ENCODE measurements at regions of chr2 and their contacts with region 1.

Region 1: DNA sequence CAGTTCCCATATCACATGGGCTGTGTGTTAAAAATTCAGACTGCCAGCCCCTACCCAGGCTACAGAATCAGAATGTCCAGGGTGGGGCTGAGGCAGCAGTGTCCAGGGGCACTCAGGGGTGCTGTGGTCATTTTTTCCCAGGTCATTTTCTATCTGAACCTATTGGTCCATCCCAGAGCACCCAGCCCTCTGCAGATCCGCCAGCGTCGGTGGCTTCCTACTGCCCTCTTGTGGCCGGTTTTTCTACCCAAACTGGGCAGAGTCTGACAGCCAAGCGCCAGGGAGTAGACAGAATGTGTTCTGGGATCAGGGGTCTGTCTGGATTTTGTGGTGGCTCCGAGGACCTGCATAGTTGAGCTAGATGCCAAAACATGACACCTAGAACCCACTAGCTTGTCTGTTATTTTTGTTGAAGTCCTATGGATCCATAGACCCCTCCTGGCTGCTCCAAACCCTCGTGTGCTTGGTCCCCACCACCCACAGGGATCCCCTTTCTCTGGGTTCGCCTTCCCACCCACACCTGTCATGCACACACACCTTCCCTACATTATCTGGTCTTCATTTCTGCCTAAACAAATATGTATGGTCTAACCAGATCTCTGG is 34.1 kb upstream of the RMDN2 start:
- DNase-seq: peak; percentile 79 to 90
- ATAC-seq: peak; percentile 98 to 100
- H3K4me3 ChIP-seq: no peak overlapping the region
- H3K27ac ChIP-seq: no peak overlapping the region
- H3K4me1 ChIP-seq: no peaks in the 10 kb centered on the region
- CTCF ChIP-seq: peak; percentile 91
- EP300 ChIP-seq: no peak
- POLR2A ChIP-seq: no peak
- RAD21 ChIP-seq: peak; percentile 86 to 94

Region 2: GRCh38 chr2:37767956-37768925 is 122.8 kb before region 1 on chr2:
- CTCF ChIA-PET with region 1: no interaction called
- POLR2A ChIA-PET with region 1: no interaction called
- DNase-seq: peak; percentile 53 to 87
- ATAC-seq: peak; percentile 80 to 95
- H3K4me3 ChIP-seq: no peak overlapping the region
- H3K27ac ChIP-seq: peak overlapping the region; percentile 86 to 92
- H3K4me1 ChIP-seq: peaks cover 71% of the 10 kb centered on the region
- CTCF ChIP-seq: no peak
- EP300 ChIP-seq: peak; percentile 72 to 88; a peak in 4 of 5 replicates
- POLR2A ChIP-seq: no peak
- RAD21 ChIP-seq: peak; percentile 40 to 66

Region 3: DNA sequence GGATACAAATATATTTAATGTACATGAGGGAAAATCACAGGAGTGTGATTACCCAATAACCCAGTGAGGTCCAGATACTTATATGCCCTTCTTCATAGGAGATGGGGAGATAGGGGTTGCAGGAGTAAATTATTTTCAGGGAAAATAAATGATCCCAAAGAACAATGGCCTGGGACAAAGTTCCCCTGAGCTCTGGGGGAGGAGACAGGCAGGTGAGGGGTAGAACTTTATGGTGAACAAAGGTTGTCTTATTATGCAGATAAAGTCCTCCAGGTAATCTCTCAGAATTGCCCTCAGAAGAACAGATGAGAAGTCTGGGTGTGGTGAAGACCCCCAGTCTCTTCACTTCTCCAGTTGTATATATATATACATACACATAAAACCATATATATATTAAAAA is 12.0 kb after region 1 on chr2:
- CTCF ChIA-PET with region 1: interaction called, 30 read pairs
- POLR2A ChIA-PET with region 1: no interaction called
- DNase-seq: no peak
- ATAC-seq: no peak
- H3K4me3 ChIP-seq: no peak overlapping the region
- H3K27ac ChIP-seq: no peak overlapping the region
- H3K4me1 ChIP-seq: no peaks in the 10 kb centered on the region; the same call in 2 of the 3 replicates
- CTCF ChIP-seq: no peak
- EP300 ChIP-seq: no peak
- POLR2A ChIP-seq: no peak
- RAD21 ChIP-seq: no peak